ENCODE measurements at regions of chr4 and their contacts with region 1.

Region 1: GRCh38 chr4:147866532-147867271 is 134.8 kb downstream of the ARHGAP10 start:
- DNase-seq: peak; percentile 96
- H3K4me3 ChIP-seq: no peak overlapping the region
- H3K27ac ChIP-seq: peak overlapping the region; percentile 39 to 81 (median 70)
- H3K4me1 ChIP-seq: peaks cover 0 to 58% (median 47%) of the 10 kb centered on the region in 4 donors
- H3K27me3 ChIP-seq: no peaks in the 10 kb centered on the region
- CTCF ChIP-seq: peak; percentile 97 to 100 (median 98)
- EP300 ChIP-seq: no peak
- POLR2A ChIP-seq: no peak

Region 2: GRCh38 chr4:147524601-147525000 is 342.1 kb before region 1 on chr4:
- intact Hi-C with region 1: loop called (anchors 5 kb)
- DNase-seq: no peak
- H3K4me3 ChIP-seq: no peak overlapping the region
- H3K27ac ChIP-seq: peak overlapping the region in 1 of 4 donors; percentile 45
- H3K4me1 ChIP-seq: peaks cover 0 to 24% (median 20%) of the 10 kb centered on the region in 4 donors
- H3K27me3 ChIP-seq: no peaks in the 10 kb centered on the region
- CTCF ChIP-seq: no peak
- EP300 ChIP-seq: no peak
- POLR2A ChIP-seq: no peak

Region 3: GRCh38 chr4:147617173-147617840 is 249.4 kb before region 1 on chr4 and contains the start of gene TMEM184C:
- intact Hi-C with region 1: loop called (anchors 5 kb)
- DNase-seq: peak; percentile 99
- H3K4me3 ChIP-seq: peak within 1 kb of the TSS; percentile 64 to 78 (median 68)
- H3K27ac ChIP-seq: peak within 1 kb of the TSS; percentile 70 to 82 (median 80)
- H3K4me1 ChIP-seq: peaks cover 0 to 45% (median 39%) of the 10 kb centered on the region in 4 donors
- H3K27me3 ChIP-seq: no peaks in the 10 kb centered on the region
- CTCF ChIP-seq: peak in 3 of 4 experiments; percentile 10 to 30 (median 18)
- EP300 ChIP-seq: no peak
- POLR2A ChIP-seq: peak in 1 of 2 donors; percentile 54
- total RNA-seq, gene TMEM184C: 12.2 to 23.8 (median 20.9) TPM

Region 4: DNA sequence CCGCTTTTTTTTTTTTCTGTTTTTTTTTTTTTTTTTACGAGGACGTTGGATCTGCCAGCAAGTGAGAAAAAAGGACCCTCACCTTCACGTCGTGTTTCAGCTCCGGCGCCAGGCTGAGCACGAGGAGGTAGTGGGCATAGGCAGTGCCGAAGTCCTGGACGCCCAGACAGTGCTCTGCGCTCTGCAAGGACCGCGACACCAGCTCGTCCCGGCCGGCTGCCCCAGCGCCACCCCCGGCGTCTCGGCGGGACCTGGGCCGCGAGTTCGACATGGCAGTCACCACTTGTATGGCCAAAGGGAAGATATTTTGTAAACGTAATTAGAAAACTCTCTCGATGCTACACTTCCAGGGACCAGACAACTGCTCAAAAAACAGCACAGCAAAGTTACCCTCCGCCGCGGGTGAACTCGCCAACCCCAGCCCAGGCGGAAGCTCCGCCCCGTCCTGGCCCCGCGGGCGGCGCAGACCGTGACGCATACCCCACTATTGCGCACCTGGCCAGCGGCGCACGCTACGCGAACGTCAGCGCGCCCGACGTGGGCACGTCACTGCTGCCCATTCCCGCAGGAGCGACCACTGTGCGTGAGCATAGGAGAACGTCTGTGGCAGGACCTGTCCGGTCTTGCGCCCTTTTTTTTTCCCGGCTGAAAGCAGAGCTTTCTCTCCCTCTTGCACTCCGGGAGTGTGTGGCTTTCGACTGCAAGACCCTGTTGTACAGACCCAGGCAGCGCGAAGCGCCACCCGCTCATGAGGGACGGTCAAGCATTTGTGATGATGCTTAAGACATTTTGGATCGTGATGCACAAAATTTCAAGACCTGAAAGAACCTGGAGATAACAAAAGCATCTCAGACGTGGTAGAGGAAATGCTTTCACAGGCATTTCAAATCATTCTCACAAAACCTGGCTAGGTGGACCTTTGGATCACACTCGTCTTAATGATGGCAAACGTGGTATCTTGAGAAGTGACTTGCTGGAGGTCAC is 182.7 kb before region 1 on chr4 and contains the start of gene PRMT9:
- intact Hi-C with region 1: loop called (anchors 1 kb)
- DNase-seq: peak; percentile 96
- H3K4me3 ChIP-seq: peak within 1 kb of the TSS; percentile 65 to 90 (median 80)
- H3K27ac ChIP-seq: peak within 1 kb of the TSS; percentile 84 to 95 (median 92)
- H3K4me1 ChIP-seq: peaks cover 0 to 22% (median 16%) of the 10 kb centered on the region in 4 donors
- H3K27me3 ChIP-seq: no peaks in the 10 kb centered on the region
- CTCF ChIP-seq: no peak
- EP300 ChIP-seq: peak in 3 of 4 donors; percentile 94 to 95 (median 94)
- POLR2A ChIP-seq: peak; percentile 87 to 90
- total RNA-seq, gene PRMT9: 7.1 to 10.7 (median 10.0) TPM

Region 5: GRCh38 chr4:147707865-147708672 is 158.6 kb before region 1 on chr4:
- intact Hi-C with region 1: loop called (anchors 1 kb)
- DNase-seq: peak; percentile 70
- H3K4me3 ChIP-seq: no peak overlapping the region
- H3K27ac ChIP-seq: no peak overlapping the region
- H3K4me1 ChIP-seq: peaks cover 0 to 10% (median 0%) of the 10 kb centered on the region in 4 donors
- H3K27me3 ChIP-seq: no peaks in the 10 kb centered on the region
- CTCF ChIP-seq: peak; percentile 83 to 87 (median 84)
- EP300 ChIP-seq: no peak
- POLR2A ChIP-seq: no peak

Region 6: GRCh38 chr4:147731580-147732517 is 134.9 kb before region 1 on chr4 and contains the start of gene ARHGAP10:
- intact Hi-C with region 1: loop called (anchors 2 kb)
- DNase-seq: peak; percentile 92
- H3K4me3 ChIP-seq: peak within 1 kb of the TSS; percentile 58 to 82 (median 80)
- H3K27ac ChIP-seq: peak within 1 kb of the TSS; percentile 87 to 97 (median 95)
- H3K4me1 ChIP-seq: peaks cover 0 to 44% (median 29%) of the 10 kb centered on the region in 4 donors
- H3K27me3 ChIP-seq: no peaks in the 10 kb centered on the region
- CTCF ChIP-seq: no peak
- EP300 ChIP-seq: no peak
- POLR2A ChIP-seq: no peak
- total RNA-seq, gene ARHGAP10: 123 to 158 (median 139) TPM